Mammary epithelial cell (primary cell): ENCODE measurements at regions of chrX and their contacts with region 1.

Region 1: DNA sequence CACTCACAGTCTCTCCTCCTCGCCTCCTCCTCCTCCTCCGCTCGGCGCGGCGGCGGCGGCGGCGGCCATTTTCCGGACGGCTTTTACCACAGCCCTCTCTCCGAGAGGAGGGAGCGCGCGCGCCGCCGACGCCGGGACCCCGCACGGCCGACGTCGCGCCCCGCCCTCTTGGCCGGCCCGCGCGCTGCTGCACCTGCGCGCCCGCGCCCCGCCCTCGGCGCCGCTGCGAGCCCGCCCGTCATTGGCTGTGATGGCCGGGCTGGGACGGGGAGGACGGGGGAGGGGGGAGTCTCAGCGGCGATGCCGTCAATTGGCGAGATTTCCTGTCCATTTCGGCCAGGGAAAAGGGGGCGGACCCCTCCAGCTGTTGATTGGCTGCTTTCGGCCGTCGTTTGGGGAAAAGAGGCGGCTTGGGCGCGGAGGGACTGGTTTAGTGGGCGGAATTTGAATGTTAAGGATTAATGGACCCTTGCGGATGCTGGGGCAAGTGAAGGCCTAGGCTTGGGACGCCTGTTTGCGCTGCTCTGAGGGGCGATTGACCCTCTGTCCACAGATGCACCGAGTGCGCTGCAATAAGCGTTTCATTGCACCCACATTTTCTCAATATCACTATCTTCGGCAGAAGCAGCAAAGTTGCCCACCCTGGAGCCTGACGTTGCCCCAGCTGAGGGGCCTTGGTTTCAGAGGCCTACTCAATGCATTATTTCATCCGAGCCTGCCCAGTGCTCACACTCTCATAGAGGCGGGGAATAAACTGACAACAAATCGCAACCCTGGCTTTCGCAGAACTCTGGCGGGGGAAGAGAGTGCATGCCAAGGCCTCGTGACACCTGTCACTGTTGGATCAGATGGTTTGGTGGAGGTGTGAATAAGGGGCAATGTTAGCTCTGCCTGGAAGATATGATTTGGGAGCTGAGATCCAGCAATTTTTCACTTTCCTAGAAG is at the start of gene MECP2:
- DNase-seq: peak; percentile 86
- H3K4me3 ChIP-seq: peak within 1 kb of the TSS; percentile 41 to 57 (median 50)
- H3K27ac ChIP-seq: peak within 1 kb of the TSS; percentile 9
- H3K4me1 ChIP-seq: peaks cover 6% of the 10 kb centered on the region
- H3K27me3 ChIP-seq: no peaks in the 10 kb centered on the region
- CTCF ChIP-seq: no peak
- total RNA-seq, gene MECP2: 17.5 to 35.6 TPM

Region 2: DNA sequence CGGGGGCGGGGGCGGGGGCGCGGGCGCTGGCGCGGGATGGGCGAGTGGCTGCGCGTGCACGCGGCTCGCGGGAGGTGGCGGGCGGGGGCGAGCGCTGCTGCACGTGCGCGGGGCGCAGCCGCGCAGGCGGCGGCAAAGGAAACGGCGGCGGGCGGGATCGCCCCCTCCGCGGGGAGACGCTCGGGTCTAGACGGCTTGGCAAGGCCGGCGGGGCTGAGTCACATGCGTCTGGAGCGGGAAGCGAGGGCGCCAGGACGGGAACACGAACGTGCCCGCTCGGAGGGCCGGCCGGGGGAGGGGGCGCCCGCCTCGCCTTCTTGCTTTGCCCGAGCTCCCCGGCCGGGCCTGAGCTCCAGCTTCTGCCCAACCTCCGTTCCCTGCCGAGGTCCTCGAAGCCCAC is 623.2 kb before region 1 on chrX:
- CTCF ChIA-PET with region 1: no interaction called
- dilution Hi-C with region 1: no loop called
- in situ Hi-C with region 1: no loop called
- intact Hi-C with region 1: no loop called
- DNase-seq: no peak
- H3K4me3 ChIP-seq: no peak overlapping the region
- H3K27ac ChIP-seq: no peak overlapping the region
- H3K4me1 ChIP-seq: no peaks in the 10 kb centered on the region
- H3K27me3 ChIP-seq: no peaks in the 10 kb centered on the region
- CTCF ChIP-seq: no peak

Region 3: GRCh38 chrX:153726286-153727122 is 371.4 kb before region 1 on chrX:
- CTCF ChIA-PET with region 1: no interaction called
- dilution Hi-C with region 1: no loop called
- in situ Hi-C with region 1: no loop called
- intact Hi-C with region 1: no loop called
- DNase-seq: no peak
- H3K4me3 ChIP-seq: no peak overlapping the region
- H3K27ac ChIP-seq: no peak overlapping the region
- H3K4me1 ChIP-seq: peaks cover 30% of the 10 kb centered on the region
- H3K27me3 ChIP-seq: no peaks in the 10 kb centered on the region
- CTCF ChIP-seq: no peak

Region 4: GRCh38 chrX:154040307-154040756 is 57.5 kb before region 1 on chrX:
- CTCF ChIA-PET with region 1: no interaction called
- dilution Hi-C with region 1: loop called (anchors 5 kb)
- in situ Hi-C with region 1: no loop called
- intact Hi-C with region 1: no loop called
- DNase-seq: peak; percentile 65
- H3K4me3 ChIP-seq: no peak overlapping the region
- H3K27ac ChIP-seq: no peak overlapping the region
- H3K4me1 ChIP-seq: peaks cover 2% of the 10 kb centered on the region
- H3K27me3 ChIP-seq: no peaks in the 10 kb centered on the region
- CTCF ChIP-seq: no peak

Region 5: DNA sequence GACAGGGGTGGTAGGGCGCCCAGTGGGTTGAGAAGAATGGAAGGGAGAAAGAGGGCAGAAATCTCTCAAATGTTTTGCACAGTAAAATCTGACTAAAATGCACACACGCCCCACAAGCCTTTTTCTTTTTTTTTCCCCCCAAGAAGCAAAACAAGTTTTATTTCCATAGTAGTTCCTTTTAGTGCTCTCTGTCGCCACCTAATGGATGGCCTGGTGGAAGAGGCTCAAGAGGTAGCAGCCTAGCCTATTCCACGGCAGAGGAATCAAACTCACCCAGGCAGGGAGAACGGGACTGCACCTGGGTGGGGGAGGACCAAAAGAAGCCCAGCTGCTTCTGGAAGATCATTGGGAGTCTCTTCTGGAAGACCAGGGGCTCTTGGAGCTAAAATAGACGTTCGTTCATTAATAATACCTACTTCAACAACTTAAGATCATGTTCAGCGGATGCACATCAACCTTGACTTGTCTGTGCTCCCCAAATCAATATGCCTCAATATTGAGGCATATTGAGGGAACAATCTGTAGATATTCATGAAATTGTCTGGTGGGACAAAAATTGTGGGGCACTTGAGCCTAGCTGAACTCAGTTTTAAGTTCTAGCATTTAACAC is 46.6 kb before region 1 on chrX:
- CTCF ChIA-PET with region 1: no interaction called
- dilution Hi-C with region 1: no loop called
- in situ Hi-C with region 1: no loop called
- intact Hi-C with region 1: loop called (anchors 2 kb)
- DNase-seq: peak; percentile 35
- H3K4me3 ChIP-seq: no peak overlapping the region
- H3K27ac ChIP-seq: no peak overlapping the region
- H3K4me1 ChIP-seq: no peaks in the 10 kb centered on the region
- H3K27me3 ChIP-seq: no peaks in the 10 kb centered on the region
- CTCF ChIP-seq: peak; percentile 67 to 73

Region 6: DNA sequence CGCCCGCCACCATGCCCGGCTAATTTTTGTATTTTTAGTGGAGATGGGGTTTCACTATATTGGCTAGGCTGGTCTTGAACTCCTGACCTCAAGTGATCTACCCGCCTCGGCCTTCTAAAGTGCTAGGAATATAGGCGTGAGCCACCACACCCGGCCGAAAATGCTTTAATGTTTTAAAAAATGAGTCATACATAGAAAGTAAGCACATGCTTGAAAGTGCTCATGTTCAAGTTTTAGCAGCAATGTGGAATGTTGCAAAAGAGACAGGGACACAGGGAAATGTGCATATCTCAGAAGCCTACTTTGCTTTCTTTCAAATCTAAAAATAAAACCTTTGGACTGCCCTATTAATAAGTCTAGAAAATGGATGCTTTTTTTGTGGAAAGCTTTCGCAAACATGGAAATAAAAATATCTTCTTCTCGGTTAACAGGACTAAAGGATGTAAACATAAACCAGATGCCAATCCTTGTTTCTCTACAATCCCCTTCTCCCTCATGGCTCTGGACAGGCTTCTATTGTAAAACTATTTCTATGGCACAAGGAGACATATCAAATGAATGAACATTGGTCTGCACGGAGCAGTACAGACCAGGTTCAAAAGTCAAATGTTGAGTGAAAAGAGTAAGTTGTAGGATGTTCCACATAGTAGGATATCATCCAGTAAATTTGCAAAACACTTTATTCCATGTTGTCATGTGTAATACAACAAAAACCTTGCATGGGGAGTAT is 15.3 kb before region 1 on chrX:
- CTCF ChIA-PET with region 1: no interaction called
- dilution Hi-C with region 1: no loop called
- in situ Hi-C with region 1: no loop called
- intact Hi-C with region 1: loop called (anchors 2 kb)
- DNase-seq: peak; percentile 55
- H3K4me3 ChIP-seq: no peak overlapping the region
- H3K27ac ChIP-seq: no peak overlapping the region
- H3K4me1 ChIP-seq: no peaks in the 10 kb centered on the region
- H3K27me3 ChIP-seq: no peaks in the 10 kb centered on the region
- CTCF ChIP-seq: no peak